CD8-positive, alpha-beta T cell (primary cell): ENCODE measurements at regions of chr1 and their contacts with region 1.

Region 1: DNA sequence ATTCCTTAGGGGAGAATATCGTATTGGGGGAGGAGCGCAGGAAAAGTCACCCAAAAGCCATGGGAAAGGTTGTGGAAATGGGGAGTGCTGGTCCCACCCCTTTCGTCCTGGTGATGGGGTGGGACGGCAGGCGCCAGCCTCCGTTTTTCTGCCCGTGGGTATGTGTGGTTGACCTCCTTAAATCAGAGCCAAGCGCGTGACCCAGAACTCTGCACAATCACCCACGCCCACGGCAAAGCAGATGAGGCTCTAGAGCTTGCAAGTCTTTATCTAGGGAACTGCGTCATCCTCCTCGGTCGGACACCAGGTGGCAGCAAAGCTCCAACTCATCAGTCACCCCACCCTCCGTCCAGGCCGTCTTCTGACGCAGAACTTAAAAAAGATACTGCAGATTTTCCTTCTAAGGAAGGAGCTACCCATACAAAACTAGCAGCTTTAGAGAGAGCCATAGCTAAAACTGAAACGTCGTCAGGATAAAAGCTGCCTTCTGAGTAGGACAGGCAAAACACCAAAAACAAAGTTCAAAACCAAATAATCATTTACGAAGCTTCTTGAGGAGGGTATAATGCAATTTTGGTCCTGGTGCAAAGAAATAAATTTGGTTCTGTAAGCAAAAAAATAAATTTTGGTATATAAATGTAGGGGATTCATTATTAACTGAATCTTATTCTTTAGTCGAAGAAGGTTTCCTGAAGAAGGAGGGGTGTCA is 62.0 kb downstream of the TBX19 start:
- DNase-seq: peak; percentile 79 to 95 (median 88)
- ATAC-seq: peak; percentile 99
- H3K4me3 ChIP-seq: no peak overlapping the region
- H3K4me3 Mint-ChIP-seq: peak overlapping the region; percentile 54
- H3K27ac ChIP-seq: peak overlapping the region in 1 of 2 experiments; percentile 48
- H3K27ac Mint-ChIP-seq: peak overlapping the region; percentile 92
- H3K4me1 ChIP-seq: peaks cover 19% of the 10 kb centered on the region
- H3K4me1 Mint-ChIP-seq: peaks cover 32% of the 10 kb centered on the region
- H3K27me3 ChIP-seq: no peaks in the 10 kb centered on the region
- H3K27me3 Mint-ChIP-seq: no peaks in the 10 kb centered on the region
- CTCF ChIP-seq: peak; percentile 71

Region 2: DNA sequence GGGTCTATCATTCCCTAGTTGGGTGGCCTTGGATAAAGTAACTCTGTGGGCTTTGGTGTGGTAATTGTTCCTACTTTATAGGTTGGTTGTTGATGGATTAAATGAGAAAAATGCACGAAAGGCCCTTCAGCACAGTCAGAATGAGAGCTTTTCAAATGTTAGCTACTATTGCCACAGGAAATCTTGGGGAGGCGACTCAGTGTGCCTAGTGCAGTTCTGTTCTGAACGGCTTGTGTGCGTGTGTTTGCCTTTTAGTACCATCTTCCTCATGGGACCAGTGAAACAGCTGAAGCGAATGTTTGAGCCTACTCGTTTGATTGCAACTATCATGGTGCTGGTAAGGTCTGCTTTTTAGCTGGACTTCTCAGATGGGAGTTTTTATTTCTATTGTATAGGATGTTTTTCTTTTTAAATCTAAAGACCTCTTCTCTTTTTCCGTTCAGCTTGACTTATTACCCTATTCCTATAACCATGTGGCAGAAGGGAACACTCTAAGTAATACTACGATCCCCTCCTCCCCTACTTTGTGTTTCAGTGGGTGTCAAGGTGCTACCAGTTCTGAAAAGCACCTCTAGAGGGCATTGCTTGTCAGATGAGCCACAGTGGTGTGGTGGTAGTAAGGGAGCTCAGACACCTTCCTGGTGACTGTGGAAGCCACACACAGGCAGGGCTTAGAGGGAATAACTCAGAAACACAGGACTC is 107.7 kb before region 1 on chr1:
- CTCF ChIA-PET with region 1: interaction called, 11 read pairs
- POLR2A ChIA-PET with region 1: no interaction called
- intact Hi-C with region 1: no loop called
- DNase-seq: peak in 5 of 9 experiments; percentile 20 to 69 (median 36)
- ATAC-seq: peak; percentile 98
- H3K4me3 ChIP-seq: no peak overlapping the region
- H3K4me3 Mint-ChIP-seq: no peak overlapping the region
- H3K27ac ChIP-seq: no peak overlapping the region
- H3K27ac Mint-ChIP-seq: peak overlapping the region; percentile 38
- H3K4me1 ChIP-seq: peaks cover 2% of the 10 kb centered on the region
- H3K4me1 Mint-ChIP-seq: peaks cover 48% of the 10 kb centered on the region
- H3K27me3 ChIP-seq: no peaks in the 10 kb centered on the region
- H3K27me3 Mint-ChIP-seq: no peaks in the 10 kb centered on the region
- CTCF ChIP-seq: peak; percentile 56

Region 3: DNA sequence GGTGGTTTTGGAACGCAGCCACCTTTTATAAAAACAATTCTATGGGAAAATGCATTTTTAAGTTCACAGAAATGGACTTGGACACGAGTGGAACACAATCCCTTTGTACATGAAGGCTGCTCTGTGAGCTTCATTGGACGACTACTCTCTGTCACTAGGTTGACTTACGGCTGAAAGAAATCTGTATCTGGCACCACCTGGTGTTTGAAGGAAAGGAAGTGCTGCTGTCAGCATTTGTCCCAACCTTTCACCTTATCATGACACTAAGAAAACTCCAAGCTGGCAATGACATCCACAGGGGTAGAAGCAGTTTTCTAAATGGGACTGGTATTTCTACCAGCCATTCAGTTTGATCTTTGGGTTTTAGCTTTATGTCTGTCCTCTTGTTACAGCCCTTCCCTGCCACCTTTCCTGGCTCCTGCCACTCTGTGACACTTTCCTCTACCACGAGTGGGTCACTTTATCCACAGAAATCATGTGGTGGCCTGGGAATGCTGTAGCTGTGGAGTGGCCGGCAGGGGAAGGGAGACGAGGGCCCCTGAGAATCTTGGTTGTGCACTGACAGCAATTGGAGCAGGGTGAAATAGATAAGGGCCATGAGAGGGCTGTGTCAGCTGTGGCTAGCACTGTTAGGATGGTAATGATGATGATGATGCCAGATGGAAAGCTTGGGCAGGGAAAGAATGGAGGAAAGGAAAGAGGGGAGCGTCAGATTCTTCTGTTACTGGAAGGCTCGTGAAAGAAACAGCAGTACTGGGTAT is 23.2 kb after region 1 on chr1:
- CTCF ChIA-PET with region 1: interaction called, 108 read pairs
- POLR2A ChIA-PET with region 1: interaction called, 13 read pairs
- intact Hi-C with region 1: loop called (anchors 1 kb)
- DNase-seq: peak in 2 of 9 experiments; percentile 53 to 57
- ATAC-seq: no peak
- H3K4me3 ChIP-seq: no peak overlapping the region
- H3K4me3 Mint-ChIP-seq: no peak overlapping the region
- H3K27ac ChIP-seq: no peak overlapping the region
- H3K27ac Mint-ChIP-seq: no peak overlapping the region
- H3K4me1 ChIP-seq: peaks cover 24% of the 10 kb centered on the region
- H3K4me1 Mint-ChIP-seq: peaks cover 30% of the 10 kb centered on the region
- H3K27me3 ChIP-seq: no peaks in the 10 kb centered on the region
- H3K27me3 Mint-ChIP-seq: no peaks in the 10 kb centered on the region
- CTCF ChIP-seq: no peak

Region 4: GRCh38 chr1:168439456-168440375 is 97.0 kb after region 1 on chr1:
- CTCF ChIA-PET with region 1: interaction called, 109 read pairs
- POLR2A ChIA-PET with region 1: interaction called, 11 read pairs
- intact Hi-C with region 1: loop called (anchors 1 kb)
- DNase-seq: peak; percentile 69 to 92 (median 84)
- ATAC-seq: peak; percentile 88
- H3K4me3 ChIP-seq: peak overlapping the region; percentile 21 to 29
- H3K4me3 Mint-ChIP-seq: peak overlapping the region; percentile 83
- H3K27ac ChIP-seq: peak overlapping the region in 1 of 2 experiments; percentile 53
- H3K27ac Mint-ChIP-seq: peak overlapping the region; percentile 90
- H3K4me1 ChIP-seq: peaks cover 46% of the 10 kb centered on the region
- H3K4me1 Mint-ChIP-seq: peaks cover 58% of the 10 kb centered on the region
- H3K27me3 ChIP-seq: no peaks in the 10 kb centered on the region
- H3K27me3 Mint-ChIP-seq: no peaks in the 10 kb centered on the region
- CTCF ChIP-seq: peak; percentile 70

Region 5: GRCh38 chr1:169106095-169106920 is 763.6 kb after region 1 on chr1 and contains the start of gene ATP1B1:
- CTCF ChIA-PET with region 1: interaction called, 5 read pairs
- POLR2A ChIA-PET with region 1: no interaction called
- intact Hi-C with region 1: loop called in 1 of 2 experiments (anchors 5 kb)
- DNase-seq: peak; percentile 59 to 88 (median 78)
- ATAC-seq: peak; percentile 89
- H3K4me3 ChIP-seq: peak within 1 kb of the TSS; percentile 65 to 74
- H3K4me3 Mint-ChIP-seq: peak within 1 kb of the TSS; percentile 91
- H3K27ac ChIP-seq: no peak within 1 kb of the TSS
- H3K27ac Mint-ChIP-seq: peak within 1 kb of the TSS; percentile 23
- H3K4me1 ChIP-seq: peaks cover 24% of the 10 kb centered on the region
- H3K4me1 Mint-ChIP-seq: peaks cover 33% of the 10 kb centered on the region
- H3K27me3 ChIP-seq: peaks cover 0 to 2% of the 10 kb centered on the region in 2 experiments
- H3K27me3 Mint-ChIP-seq: peaks cover 4% of the 10 kb centered on the region
- CTCF ChIP-seq: peak; percentile 29
- total RNA-seq, gene ATP1B1: 2.6 to 3.0 TPM

Region 6: DNA sequence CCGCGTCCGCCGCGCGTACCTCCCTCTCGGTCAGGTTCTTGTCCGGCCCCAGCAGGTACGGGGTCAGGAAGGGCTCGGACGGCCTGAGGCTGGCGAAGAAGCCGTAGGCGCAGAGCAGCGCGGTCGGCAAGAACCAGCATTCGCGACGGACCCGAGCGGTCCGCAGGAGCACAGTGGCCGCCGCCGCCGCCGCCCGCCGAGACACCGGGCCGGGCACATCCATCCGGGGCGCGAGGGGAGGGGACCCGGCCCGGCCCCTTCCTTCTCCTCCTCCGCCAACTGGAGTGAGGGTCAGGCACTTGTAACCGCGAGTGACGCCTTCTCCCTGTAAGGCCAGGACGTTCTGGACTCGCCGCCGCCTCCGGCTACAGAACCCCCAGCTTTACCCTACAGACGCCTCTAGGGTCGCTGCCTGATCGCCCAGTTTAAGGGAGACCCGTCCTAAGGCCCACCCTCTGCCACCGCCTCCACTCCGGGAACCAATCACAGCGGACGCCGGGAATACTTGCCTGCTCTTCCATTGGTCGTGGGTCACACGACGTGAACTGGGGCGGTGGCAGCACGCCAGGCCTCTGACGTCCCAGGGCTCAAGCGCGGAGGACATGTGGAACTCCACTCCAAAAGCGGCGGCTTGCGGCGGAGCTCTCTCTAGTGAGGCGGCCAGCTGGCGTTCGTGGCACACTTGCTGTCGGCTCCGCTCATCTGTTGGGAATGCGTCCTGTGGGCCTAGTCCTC is 1143.0 kb after region 1 on chr1 and contains the start of gene SLC19A2:
- CTCF ChIA-PET with region 1: no interaction called
- POLR2A ChIA-PET with region 1: no interaction called
- intact Hi-C with region 1: loop called in 1 of 2 experiments (anchors 5 kb)
- DNase-seq: peak; percentile 84 to 97 (median 93)
- ATAC-seq: peak; percentile 98
- H3K4me3 ChIP-seq: peak within 1 kb of the TSS; percentile 69 to 79
- H3K4me3 Mint-ChIP-seq: peak within 1 kb of the TSS; percentile 97
- H3K27ac ChIP-seq: peak within 1 kb of the TSS; percentile 73 to 79
- H3K27ac Mint-ChIP-seq: peak within 1 kb of the TSS; percentile 95
- H3K4me1 ChIP-seq: peaks cover 20% of the 10 kb centered on the region
- H3K4me1 Mint-ChIP-seq: peaks cover 43% of the 10 kb centered on the region
- H3K27me3 ChIP-seq: no peaks in the 10 kb centered on the region
- H3K27me3 Mint-ChIP-seq: no peaks in the 10 kb centered on the region
- CTCF ChIP-seq: no peak
- total RNA-seq, gene SLC19A2: 4.7 to 6.1 TPM